HepG2 (cell line): ENCODE measurements at regions of chr14 and their contacts with region 1.

Region 1: GRCh38 chr14:80754696-80755095 is 186.8 kb downstream of the CEP128 start:
- DNase-seq: no peak
- ATAC-seq: no peak
- H3K4me3 ChIP-seq: no peak overlapping the region
- H3K27ac ChIP-seq: no peak overlapping the region
- H3K4me1 ChIP-seq: no peaks in the 10 kb centered on the region
- H3K27me3 ChIP-seq: no peaks in the 10 kb centered on the region
- CTCF ChIP-seq: no peak
- EP300 ChIP-seq: no peak
- POLR2A ChIP-seq: no peak
- RAD21 ChIP-seq: no peak

Region 2: DNA sequence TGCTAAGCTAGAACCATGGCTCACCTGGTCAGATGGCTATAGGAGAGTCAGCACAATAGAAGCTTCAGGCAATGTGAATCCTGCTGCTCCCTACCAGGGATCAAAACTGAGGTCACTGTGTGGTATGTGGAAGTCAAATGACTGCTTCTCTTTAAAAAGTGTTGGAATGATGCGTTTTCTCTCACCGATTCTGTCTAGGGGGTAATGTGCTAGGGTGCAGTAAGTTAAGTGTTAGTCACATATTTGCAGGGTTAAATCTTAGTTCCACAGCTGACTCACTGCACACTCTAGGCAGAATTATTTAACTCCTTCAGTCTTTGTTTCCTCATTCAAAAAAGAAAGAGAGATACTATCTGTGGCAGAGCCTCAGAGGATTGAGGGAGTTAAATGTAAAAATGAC is 1240.0 kb before region 1 on chr14:
- CTCF ChIA-PET with region 1: no interaction called
- POLR2A ChIA-PET with region 1: no interaction called
- in situ Hi-C with region 1: no loop called
- intact Hi-C with region 1: loop called (anchors 5 kb)
- DNase-seq: no peak
- ATAC-seq: no peak
- H3K4me3 ChIP-seq: no peak overlapping the region
- H3K27ac ChIP-seq: no peak overlapping the region
- H3K4me1 ChIP-seq: no peaks in the 10 kb centered on the region
- H3K27me3 ChIP-seq: no peaks in the 10 kb centered on the region
- CTCF ChIP-seq: no peak
- EP300 ChIP-seq: no peak
- POLR2A ChIP-seq: no peak
- RAD21 ChIP-seq: no peak